ENCODE measurements at regions of chr2 and their contacts with region 1.

Region 1: GRCh38 chr2:235563051-235563910 is 69.4 kb downstream of the AGAP1 start:
- DNase-seq: no peak
- H3K4me3 ChIP-seq: no peak overlapping the region
- H3K27ac ChIP-seq: no peak overlapping the region
- H3K4me1 ChIP-seq: no peaks in the 10 kb centered on the region
- H3K27me3 ChIP-seq: no peaks in the 10 kb centered on the region
- CTCF ChIP-seq: no peak

Region 2: DNA sequence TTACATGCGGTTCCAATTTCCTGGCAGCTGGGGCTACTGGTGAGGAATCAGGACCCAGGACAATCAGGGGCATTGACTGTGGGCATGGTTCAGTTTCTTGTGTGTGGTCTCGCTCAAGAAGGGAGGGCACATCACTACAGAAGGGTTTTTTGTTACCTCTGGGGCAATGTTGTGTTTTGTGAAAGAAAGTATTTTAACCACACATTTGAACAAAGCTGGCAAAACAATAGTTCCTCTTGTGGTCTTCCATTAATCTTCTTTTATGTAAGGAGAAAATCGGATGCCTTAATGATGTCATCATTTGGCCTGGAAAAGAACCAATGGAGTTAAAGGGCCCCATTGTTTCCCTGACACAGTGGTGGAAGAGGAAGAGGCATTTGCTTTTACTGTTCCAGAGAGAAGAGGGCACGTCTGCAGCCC is 414.0 kb before region 1 on chr2:
- CTCF ChIA-PET with region 1: no interaction called
- dilution Hi-C with region 1: loop called (anchors 10 kb)
- in situ Hi-C with region 1: no loop called
- intact Hi-C with region 1: no loop called
- DNase-seq: peak; percentile 43
- H3K4me3 ChIP-seq: no peak overlapping the region
- H3K27ac ChIP-seq: no peak overlapping the region
- H3K4me1 ChIP-seq: no peaks in the 10 kb centered on the region
- H3K27me3 ChIP-seq: no peaks in the 10 kb centered on the region
- CTCF ChIP-seq: no peak

Region 3: GRCh38 chr2:235458839-235459273 is 104.4 kb before region 1 on chr2:
- CTCF ChIA-PET with region 1: no interaction called
- dilution Hi-C with region 1: no loop called
- in situ Hi-C with region 1: no loop called
- intact Hi-C with region 1: no loop called
- DNase-seq: peak; percentile 46
- H3K4me3 ChIP-seq: no peak overlapping the region
- H3K27ac ChIP-seq: no peak overlapping the region
- H3K4me1 ChIP-seq: peaks cover 3% of the 10 kb centered on the region
- H3K27me3 ChIP-seq: no peaks in the 10 kb centered on the region
- CTCF ChIP-seq: no peak

Region 4: GRCh38 chr2:235493775-235494715 is 69.2 kb before region 1 on chr2 and contains the start of gene AGAP1:
- CTCF ChIA-PET with region 1: no interaction called
- dilution Hi-C with region 1: loop called (anchors 5 kb)
- in situ Hi-C with region 1: no loop called
- intact Hi-C with region 1: no loop called
- DNase-seq: peak; percentile 76
- H3K4me3 ChIP-seq: peak within 1 kb of the TSS; percentile 62 to 80 (median 67)
- H3K27ac ChIP-seq: peak within 1 kb of the TSS; percentile 46
- H3K4me1 ChIP-seq: peaks cover 14% of the 10 kb centered on the region
- H3K27me3 ChIP-seq: no peaks in the 10 kb centered on the region
- CTCF ChIP-seq: no peak
- total RNA-seq, gene AGAP1: 11.2 to 28.9 TPM

Region 5: DNA sequence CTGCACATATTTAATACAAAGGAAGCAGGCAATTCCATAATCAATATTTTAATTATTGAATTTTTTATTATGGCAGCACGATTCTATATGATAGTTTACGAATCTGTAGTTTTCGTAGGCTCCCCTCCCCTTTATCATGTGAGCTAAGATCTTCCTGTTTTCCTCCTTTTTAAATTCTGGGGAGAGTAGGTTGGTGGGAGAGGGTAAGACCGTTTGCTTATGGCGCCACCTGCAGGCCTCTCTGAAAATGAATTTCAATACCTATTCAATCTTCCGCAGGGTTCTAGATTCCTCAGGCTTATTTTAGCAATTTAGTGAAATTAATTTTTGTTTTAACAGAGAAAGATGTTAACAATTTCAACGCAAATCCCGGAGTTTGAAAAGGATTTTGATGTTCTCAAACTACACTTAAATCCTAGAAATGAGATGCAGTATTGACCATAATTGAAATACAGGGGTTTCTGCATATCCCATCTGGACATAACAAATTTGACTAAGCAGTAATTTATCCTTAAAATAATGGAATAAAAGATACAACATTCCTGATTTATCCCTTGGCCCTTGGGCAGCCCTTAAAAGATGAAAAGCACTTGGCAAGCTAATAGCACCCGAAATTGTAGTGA is 617.7 kb after region 1 on chr2:
- CTCF ChIA-PET with region 1: no interaction called
- dilution Hi-C with region 1: no loop called
- in situ Hi-C with region 1: no loop called
- intact Hi-C with region 1: no loop called
- DNase-seq: no peak
- H3K4me3 ChIP-seq: no peak overlapping the region
- H3K27ac ChIP-seq: no peak overlapping the region
- H3K4me1 ChIP-seq: peaks cover 21% of the 10 kb centered on the region
- H3K27me3 ChIP-seq: no peaks in the 10 kb centered on the region
- CTCF ChIP-seq: peak; percentile 59 to 70

Measured in mammary epithelial cell (primary cell).